HEK293 (cell line): ENCODE measurements at regions of chr22 and their contacts with region 1.

Region 1: GRCh38 chr22:22745225-22746060 is 101.0 kb downstream of the GGTLC2 start:
- H3K4me3 ChIP-seq: no peak overlapping the region
- H3K27ac ChIP-seq: no peak overlapping the region
- H3K4me1 ChIP-seq: no peaks in the 10 kb centered on the region
- CTCF ChIP-seq: peak; percentile 57; the same call in 1 of the 2 replicates

Region 2: DNA sequence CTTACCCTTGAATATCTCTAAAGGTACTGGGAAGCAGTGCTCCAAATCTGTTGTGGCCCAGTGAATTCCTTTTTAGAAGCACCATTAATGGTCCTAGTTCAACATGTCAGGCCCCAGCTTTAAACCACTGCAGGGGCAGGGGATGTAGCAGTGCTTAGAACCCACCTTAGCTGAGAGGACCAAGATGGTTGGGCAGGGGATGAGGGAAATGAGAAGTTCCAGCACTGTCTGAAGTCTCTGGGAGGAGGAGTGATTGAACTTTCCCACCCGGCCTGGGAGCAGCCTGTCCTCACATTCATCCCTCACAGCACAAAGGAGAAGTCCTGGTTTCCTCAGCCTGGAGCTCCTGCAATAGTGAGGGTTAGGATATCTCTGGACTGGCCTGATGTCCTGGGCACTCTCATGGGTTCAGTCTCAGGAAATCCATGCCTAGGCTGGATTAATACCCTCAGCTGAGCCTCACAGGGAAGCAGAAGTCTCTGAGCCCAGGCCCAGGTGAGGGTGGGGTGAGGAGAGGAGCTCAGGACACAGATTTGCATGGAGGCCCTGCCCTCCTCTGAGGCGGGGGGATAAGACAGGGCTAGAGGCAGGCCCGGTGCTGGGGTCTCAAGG is 157.8 kb before region 1 on chr22:
- CTCF ChIA-PET with region 1: interaction called, 12 read pairs
- POLR2A ChIA-PET with region 1: no interaction called
- H3K4me3 ChIP-seq: no peak overlapping the region
- H3K27ac ChIP-seq: no peak overlapping the region
- H3K4me1 ChIP-seq: no peaks in the 10 kb centered on the region
- CTCF ChIP-seq: no peak

Region 3: DNA sequence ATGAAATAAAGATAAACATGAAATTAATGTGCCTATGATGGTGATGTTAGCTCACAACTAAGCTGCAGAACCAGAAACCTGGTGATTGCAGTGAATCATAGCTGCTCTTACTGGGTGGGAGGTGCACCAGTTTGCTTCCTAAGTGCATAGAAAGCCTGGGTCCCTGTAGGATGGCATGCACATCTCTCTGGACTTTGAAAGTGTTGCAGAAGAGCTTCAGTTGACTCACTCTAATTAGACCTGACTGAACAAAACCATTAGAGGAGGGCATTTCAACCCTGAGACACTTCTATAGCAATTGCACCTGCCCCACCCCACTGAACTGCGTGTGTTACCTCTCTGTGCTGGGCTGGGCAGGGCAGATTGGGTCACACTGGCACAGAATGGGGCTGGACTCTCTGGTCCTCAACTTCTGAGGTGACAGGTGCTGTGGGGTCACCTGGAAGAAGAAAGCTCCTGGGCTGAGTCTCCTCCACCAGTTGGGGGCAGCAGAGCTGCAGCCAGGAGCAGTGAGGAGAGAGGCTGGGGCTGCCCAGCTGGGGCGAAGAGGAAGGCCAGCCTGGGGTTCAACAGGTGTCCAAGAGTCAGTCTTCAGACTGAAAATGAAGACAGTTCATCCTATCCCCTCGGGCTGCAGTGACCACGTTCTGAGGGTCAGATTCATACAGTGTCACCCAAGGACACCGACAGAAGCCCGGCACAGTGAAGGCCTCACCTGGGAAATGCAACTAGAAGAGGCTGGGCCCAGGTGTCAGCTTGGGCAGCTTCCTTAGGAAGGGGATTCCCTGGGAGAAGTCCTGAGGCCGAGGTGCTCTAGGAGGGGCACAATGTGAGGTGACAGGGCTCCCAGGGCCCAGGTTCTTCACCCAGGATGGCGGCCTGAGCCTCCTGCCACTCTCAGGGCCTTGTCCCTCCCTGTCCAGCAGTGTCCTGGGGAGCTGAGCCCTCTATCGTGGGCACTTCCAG is 42.9 kb before region 1 on chr22:
- CTCF ChIA-PET with region 1: interaction called, 36 read pairs
- POLR2A ChIA-PET with region 1: no interaction called
- H3K4me3 ChIP-seq: no peak overlapping the region
- H3K27ac ChIP-seq: no peak overlapping the region
- H3K4me1 ChIP-seq: no peaks in the 10 kb centered on the region
- CTCF ChIP-seq: 0 out of 2 replicates have a peak, but pooled peaks have one; percentile 18

Region 4: DNA sequence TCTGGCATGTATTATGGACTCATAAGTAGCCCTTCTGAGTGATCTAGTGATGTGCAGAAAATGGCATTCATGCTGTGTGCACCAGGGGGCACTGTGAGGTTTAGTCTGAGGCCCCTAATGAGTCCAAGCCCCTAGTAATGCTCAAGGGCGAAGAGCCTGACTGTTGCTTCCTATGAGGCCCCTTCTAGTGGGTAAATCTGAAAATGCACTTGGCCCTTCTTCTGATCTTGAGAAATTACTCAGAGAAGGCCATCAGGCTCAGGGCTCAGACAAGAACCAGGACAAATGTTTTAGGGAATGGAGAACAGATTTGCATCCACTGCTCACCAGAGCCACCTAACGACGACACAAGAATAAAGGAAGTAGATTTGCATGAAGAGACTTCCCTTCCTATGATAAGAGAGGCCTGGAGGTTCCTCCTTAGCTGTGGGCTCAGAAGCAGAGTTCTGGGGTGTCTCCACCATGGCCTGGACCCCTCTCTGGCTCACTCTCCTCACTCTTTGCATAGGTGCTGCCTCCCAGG is 25.2 kb before region 1 on chr22:
- CTCF ChIA-PET with region 1: interaction called, 12 read pairs
- POLR2A ChIA-PET with region 1: no interaction called
- H3K4me3 ChIP-seq: no peak overlapping the region
- H3K27ac ChIP-seq: no peak overlapping the region
- H3K4me1 ChIP-seq: no peaks in the 10 kb centered on the region
- CTCF ChIP-seq: peak; percentile 10; the same call in 1 of the 2 replicates